Spleen (tissue), 13 donors: ENCODE measurements at regions of chr10 and their contacts with region 1.

Region 1: DNA sequence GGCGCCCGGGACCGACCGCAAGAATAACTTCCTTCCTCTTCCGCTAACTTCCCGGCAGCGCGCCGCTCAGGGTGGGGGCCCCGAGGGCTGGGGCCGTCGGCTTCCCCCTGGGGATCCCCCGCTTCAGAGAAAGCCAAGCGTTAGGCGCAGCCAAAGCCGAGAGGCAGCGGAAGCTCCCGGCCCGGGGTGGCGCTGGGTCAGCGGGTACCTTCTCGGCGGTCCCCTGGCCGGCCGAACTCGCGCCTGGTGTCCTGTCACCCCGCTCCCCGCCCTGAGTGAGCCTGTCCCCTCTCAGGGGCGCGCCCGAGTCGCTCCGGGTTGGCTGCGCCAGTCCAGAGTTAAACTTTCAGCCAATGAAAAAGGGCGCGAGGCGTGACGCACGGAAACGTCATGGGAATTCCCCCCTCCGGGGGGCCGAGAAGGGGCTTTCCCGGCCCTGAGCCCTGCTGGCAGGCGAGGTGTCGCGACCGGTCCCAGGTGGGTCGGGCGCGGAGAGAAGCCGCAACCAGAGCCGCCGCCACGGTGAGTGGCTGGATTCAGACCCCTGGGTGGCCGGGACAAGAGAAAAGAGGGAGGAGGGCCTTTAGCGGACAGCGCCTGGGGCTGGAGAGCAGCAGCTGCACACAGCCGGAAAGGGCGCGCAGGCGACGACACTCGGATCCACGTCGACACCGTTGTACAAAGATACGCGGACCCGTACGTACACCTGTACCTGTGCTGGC is 1.3 kb upstream of the NFKB2 start:
- DNase-seq: peak; percentile 99
- H3K4me3 ChIP-seq: peak overlapping the region; percentile 67 to 95 (median 84)
- H3K27ac ChIP-seq: peak overlapping the region; percentile 88 to 100 (median 99)
- H3K4me1 ChIP-seq: peaks cover 28 to 65% (median 45%) of the 10 kb centered on the region in 6 donors
- H3K27me3 ChIP-seq: no peaks in the 10 kb centered on the region
- CTCF ChIP-seq: peak in 9 of 11 experiments; percentile 14 to 97 (median 57)
- POLR2A ChIP-seq: peak; percentile 66 to 79 (median 77)

Region 2: DNA sequence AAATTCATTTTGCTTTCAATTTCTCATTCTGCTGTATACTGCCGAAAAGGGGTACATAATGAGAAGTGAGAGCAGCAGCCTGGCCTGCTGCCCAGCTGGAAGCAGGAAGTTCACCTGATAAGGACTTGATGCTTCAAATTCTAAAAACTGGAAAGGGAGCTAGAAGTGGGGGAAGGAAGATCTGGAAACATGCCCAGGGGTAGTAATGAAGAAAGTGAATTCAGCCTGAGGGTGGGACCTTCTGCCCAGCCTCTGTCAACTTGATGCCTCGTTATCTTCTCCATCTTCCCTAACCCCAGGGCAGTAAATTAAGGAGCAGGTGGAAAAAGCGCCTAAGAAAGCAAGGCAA is 407.6 kb before region 1 on chr10:
- intact Hi-C with region 1: no loop called
- DNase-seq: peak; percentile 83
- H3K4me3 ChIP-seq: peak overlapping the region in 1 of 8 donors; percentile 4
- H3K27ac ChIP-seq: peak overlapping the region; percentile 70 to 86 (median 82)
- H3K4me1 ChIP-seq: peaks cover 9 to 25% (median 22%) of the 10 kb centered on the region in 6 donors
- H3K27me3 ChIP-seq: no peaks in the 10 kb centered on the region
- CTCF ChIP-seq: no peak
- POLR2A ChIP-seq: no peak

Region 3: GRCh38 chr10:102476466-102477141 is 82.4 kb after region 1 on chr10:
- intact Hi-C with region 1: loop called (anchors 10 kb)
- DNase-seq: no peak
- H3K4me3 ChIP-seq: no peak overlapping the region
- H3K27ac ChIP-seq: peak overlapping the region in 1 of 8 donors; percentile 46
- H3K4me1 ChIP-seq: peaks cover 0 to 24% (median 4%) of the 10 kb centered on the region in 6 donors
- H3K27me3 ChIP-seq: no peaks in the 10 kb centered on the region
- CTCF ChIP-seq: no peak
- POLR2A ChIP-seq: no peak

Region 4: GRCh38 chr10:102583435-102584417 is 189.5 kb after region 1 on chr10:
- intact Hi-C with region 1: loop called (anchors 10 kb)
- DNase-seq: peak; percentile 92
- H3K4me3 ChIP-seq: no peak overlapping the region
- H3K27ac ChIP-seq: peak overlapping the region in 3 of 8 donors; percentile 38 to 67 (median 47)
- H3K4me1 ChIP-seq: peaks cover 3 to 49% (median 32%) of the 10 kb centered on the region in 6 donors
- H3K27me3 ChIP-seq: no peaks in the 10 kb centered on the region
- CTCF ChIP-seq: peak; percentile 78 to 95 (median 90)
- POLR2A ChIP-seq: no peak